Calu3 (cell line): ENCODE measurements at regions of chr14 and their contacts with region 1.

Region 1: DNA sequence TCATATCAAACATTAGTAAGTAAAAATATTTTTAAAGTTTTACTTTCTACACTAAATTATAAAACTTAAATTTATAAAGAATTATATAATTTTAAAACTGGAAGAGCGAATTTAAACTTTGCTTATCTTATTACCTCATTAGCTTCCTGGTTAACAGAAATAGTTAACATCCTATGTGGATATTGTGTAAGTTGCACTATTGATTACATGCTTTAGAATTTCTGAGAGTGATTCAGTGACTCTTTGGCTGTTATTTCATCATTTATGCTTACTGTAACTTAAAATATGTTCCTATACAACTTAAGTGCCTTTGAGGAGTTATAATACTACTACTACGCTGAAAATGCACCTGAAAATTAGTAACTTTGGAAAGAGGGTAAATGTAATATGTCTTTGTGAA is 101.4 kb downstream of the FOXA1 start:
- DNase-seq: no peak
- H3K4me3 Mint-ChIP-seq: no peak overlapping the region
- H3K27ac Mint-ChIP-seq: peak overlapping the region; percentile 89
- H3K4me1 Mint-ChIP-seq: peaks cover 30% of the 10 kb centered on the region
- H3K27me3 Mint-ChIP-seq: no peaks in the 10 kb centered on the region
- CTCF ChIP-seq: no peak

Region 2: DNA sequence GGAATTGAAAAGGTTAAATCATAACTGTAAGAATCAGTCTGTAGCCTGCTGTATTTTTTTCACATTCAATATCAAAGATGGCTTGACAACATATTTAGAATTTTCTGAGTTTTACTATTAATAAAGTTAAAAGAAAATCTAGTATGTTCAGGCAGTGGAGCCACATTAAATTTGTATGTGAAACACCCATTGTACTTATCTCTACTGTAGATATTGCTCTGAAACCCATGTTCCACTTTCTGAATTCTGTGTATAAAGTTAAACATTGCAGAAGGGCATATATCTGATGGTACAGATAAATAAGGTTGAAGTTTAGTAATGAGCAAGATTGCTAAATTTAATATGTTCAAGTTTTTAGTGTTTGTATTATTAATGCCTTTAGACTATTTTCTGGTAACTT is 71.3 kb before region 1 on chr14:
- CTCF ChIA-PET with region 1: no interaction called
- intact Hi-C with region 1: loop called (anchors 2 kb)
- DNase-seq: no peak
- H3K4me3 Mint-ChIP-seq: no peak overlapping the region
- H3K27ac Mint-ChIP-seq: peak overlapping the region; percentile 23
- H3K4me1 Mint-ChIP-seq: peaks cover 15% of the 10 kb centered on the region
- H3K27me3 Mint-ChIP-seq: no peaks in the 10 kb centered on the region
- CTCF ChIP-seq: no peak

Region 3: DNA sequence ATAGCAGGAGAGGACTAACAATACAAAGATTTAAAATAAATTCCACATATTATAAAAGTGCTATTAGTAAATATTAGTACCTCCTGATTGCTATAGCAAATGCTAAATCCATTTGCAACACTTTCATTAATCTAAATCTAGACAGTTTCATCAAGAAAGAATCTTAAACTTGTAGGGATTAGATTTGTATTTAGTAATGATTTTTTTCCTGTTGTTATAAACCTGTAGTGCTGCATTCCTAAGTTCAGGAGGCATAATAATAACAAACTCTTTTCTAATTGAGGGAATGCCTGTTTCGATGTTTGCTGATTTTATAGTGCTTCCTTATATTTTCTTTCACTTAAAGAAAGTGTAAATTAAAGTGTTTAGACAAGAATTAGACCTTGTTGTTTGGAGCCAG is 64.7 kb before region 1 on chr14:
- CTCF ChIA-PET with region 1: no interaction called
- intact Hi-C with region 1: loop called (anchors 2 kb)
- DNase-seq: no peak
- H3K4me3 Mint-ChIP-seq: no peak overlapping the region
- H3K27ac Mint-ChIP-seq: peak overlapping the region; percentile 81
- H3K4me1 Mint-ChIP-seq: peaks cover 46% of the 10 kb centered on the region
- H3K27me3 Mint-ChIP-seq: no peaks in the 10 kb centered on the region
- CTCF ChIP-seq: no peak

Region 4: DNA sequence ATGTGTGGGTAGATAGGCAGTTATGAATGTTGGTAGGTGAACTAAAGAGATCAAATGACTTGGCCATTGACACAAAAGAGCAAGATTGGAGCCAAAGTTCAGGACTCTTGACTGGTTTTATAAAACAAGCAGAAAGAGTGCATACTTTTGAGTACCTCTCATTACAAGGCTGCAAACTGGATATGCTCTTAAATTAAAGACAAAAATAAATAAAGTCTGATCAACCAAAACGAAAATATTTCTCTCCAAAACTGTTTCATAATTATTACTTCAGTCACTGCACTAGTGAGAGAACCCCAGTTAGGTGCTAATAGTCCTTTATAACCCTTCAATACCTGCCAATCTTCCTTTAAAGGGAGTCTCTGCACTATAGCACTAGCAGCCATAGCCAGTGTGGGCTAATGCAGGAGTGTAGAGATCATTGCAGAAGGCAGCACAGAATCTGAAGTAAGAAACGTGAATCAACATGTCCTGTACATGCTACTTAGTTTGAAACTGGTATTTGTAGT is 45.7 kb before region 1 on chr14:
- CTCF ChIA-PET with region 1: no interaction called
- intact Hi-C with region 1: loop called (anchors 5 kb)
- DNase-seq: no peak
- H3K4me3 Mint-ChIP-seq: no peak overlapping the region
- H3K27ac Mint-ChIP-seq: peak overlapping the region; percentile 89
- H3K4me1 Mint-ChIP-seq: peaks cover 15% of the 10 kb centered on the region
- H3K27me3 Mint-ChIP-seq: no peaks in the 10 kb centered on the region
- CTCF ChIP-seq: no peak

Region 5: DNA sequence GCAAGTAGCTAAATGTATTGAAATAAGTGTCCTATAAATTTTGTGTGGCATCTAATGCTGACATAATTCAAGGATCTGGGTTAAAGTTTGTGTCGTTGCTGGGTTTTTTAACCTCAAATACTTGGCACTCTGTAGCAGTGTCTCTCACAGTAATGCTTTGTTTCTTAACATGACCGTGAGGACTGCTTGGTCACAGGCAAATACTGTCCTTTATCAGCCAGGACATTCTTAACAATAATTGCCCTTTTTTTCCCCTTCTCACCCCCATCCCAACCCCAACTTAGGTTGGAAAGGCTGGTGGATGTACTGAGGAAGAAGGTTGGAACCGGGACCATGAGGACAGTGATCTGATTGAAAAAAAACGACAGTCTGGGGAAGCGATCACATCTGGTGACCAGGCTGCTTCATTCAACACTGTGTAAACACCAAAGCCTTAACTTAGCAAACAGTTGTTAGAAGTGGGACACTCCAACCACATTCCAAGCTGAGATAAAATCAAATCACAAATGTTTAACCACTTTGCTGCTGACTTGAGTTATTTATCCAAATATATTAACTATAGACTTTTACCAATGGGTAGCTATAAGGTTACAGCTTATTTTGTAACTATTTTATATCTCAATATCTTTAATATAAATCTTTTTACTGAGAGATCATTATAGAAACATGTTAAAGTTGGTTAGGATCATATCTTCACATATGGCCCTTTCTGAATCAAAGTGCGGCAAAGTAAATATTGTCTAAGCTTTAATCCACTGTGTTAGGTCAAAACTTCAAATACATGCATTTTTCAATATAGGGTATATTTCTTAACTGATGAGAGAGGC is 53.2 kb after region 1 on chr14:
- CTCF ChIA-PET with region 1: no interaction called
- intact Hi-C with region 1: no loop called
- DNase-seq: peak; percentile 30
- H3K4me3 Mint-ChIP-seq: peak overlapping the region; percentile 61
- H3K27ac Mint-ChIP-seq: peak overlapping the region; percentile 85
- H3K4me1 Mint-ChIP-seq: peaks cover 26% of the 10 kb centered on the region
- H3K27me3 Mint-ChIP-seq: no peaks in the 10 kb centered on the region
- CTCF ChIP-seq: no peak

Region 6: GRCh38 chr14:37594238-37594914 is 100.8 kb after region 1 on chr14:
- CTCF ChIA-PET with region 1: no interaction called
- intact Hi-C with region 1: no loop called
- DNase-seq: peak; percentile 83
- H3K4me3 Mint-ChIP-seq: peak overlapping the region; percentile 81
- H3K27ac Mint-ChIP-seq: peak overlapping the region; percentile 98
- H3K4me1 Mint-ChIP-seq: peaks cover 7% of the 10 kb centered on the region
- H3K27me3 Mint-ChIP-seq: no peaks in the 10 kb centered on the region
- CTCF ChIP-seq: peak; percentile 76